Psoas muscle (tissue), 8 donors: ENCODE measurements at regions of chr1 and their contacts with region 1.

Region 1: DNA sequence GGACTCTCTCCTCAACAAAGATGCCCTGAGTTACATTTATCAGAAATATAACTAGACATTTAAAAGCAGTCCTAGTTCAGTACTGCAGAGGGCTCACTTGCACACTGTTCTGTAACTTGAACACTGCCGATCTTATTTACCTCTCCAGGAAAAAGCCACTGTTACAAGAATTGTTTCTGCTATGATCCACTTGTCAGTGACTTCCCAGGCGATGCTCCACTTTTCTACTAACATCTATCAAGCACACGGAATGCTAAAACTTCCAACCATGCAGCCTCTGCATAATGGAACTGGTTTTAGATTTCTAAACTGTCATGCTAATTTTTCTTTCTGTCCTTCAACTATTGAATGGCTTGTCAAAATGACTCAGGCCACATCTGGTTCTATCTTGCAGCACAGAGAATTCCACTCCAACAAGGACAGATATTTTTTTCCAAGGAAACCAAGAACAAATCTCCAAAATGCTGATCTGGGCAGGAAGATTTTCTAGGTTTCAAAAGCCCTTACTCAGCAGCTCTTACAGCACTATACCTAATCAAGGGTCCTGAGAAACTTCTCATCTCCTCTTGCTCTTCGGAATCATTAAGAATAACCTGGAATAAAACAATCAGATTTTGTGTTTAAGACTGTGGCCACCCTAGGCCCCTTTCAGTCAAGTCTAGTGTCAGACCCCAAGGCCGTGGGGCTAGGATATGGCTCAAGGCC is 9.9 kb downstream of the SEC16B start:
- DNase-seq: no peak
- ATAC-seq: peak; percentile 65 to 86 (median 76)
- H3K4me3 ChIP-seq: no peak overlapping the region
- H3K27ac ChIP-seq: no peak overlapping the region
- H3K4me1 ChIP-seq: no peaks in the 10 kb centered on the region
- H3K27me3 ChIP-seq: no peaks in the 10 kb centered on the region
- CTCF ChIP-seq: peak; percentile 36

Region 2: DNA sequence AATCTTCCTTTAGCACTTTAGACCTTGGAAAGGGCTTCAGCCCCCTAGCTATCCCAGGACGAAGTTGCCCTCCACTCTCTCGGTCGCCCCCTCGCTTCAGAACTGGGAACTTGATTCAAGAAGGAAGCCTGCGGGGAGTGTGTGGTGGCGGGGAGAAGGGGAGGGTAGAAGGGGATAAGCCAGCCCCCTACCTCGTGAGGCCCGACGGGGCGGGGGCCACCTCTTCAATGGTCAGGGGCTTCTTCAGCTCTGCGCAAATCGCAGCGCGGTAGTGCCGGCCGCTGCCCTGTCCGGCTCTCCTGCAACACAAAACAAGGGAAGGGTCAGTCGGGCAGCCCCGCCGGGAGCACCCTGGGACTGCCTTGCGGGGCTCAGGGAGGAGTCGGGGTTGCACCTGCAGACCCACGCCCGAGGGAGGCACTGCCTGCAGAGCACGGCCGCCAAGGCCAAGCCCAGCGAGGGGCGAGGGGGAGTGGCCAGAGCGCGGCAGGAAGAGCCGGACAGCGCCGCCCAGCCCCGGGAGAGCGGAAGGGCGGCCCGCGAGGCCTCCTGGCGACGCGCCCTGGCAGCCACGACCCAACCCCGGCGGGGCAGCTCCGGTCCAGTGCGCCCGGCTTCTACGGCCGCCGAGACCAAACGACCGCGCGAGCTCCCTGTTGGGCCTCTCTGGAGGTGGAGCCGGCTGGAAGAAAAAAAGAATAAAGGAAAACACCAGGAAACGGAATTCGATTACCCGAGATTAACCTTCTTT is 77.7 kb after region 1 on chr1:
- intact Hi-C with region 1: loop called in 1 of 2 experiments (anchors 5 kb)
- DNase-seq: peak; percentile 89 to 95
- ATAC-seq: peak; percentile 95 to 97 (median 97)
- H3K4me3 ChIP-seq: peak overlapping the region; percentile 76
- H3K27ac ChIP-seq: peak overlapping the region; percentile 90
- H3K4me1 ChIP-seq: peaks cover 4% of the 10 kb centered on the region
- H3K27me3 ChIP-seq: no peaks in the 10 kb centered on the region
- CTCF ChIP-seq: no peak

Region 3: GRCh38 chr1:178189814-178190213 is 229.9 kb after region 1 on chr1:
- intact Hi-C with region 1: loop called in 1 of 2 experiments (anchors 10 kb)
- DNase-seq: no peak
- ATAC-seq: peak in 3 of 4 donors; percentile 42 to 73 (median 62)
- H3K4me3 ChIP-seq: no peak overlapping the region
- H3K27ac ChIP-seq: no peak overlapping the region
- H3K4me1 ChIP-seq: no peaks in the 10 kb centered on the region
- H3K27me3 ChIP-seq: no peaks in the 10 kb centered on the region
- CTCF ChIP-seq: peak; percentile 42

Region 4: DNA sequence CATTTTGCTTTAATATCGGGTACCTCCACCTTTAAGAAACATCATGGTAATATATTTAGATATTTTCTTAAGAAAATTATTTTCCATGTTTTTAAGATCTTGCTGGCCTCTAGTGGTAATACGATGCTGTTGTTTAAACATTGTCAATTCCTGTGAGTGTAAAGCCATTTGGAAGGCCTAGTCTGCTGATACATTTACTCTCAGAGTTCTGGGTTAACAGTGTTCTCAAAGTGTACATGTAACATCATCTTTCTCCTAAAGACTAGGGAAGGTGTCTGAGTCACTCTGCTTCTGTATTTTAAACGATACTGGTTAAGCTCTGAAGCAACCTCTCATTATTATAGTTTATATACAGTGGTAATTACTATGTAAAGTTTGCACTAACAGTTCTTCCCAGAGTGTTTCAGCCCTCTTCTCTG is 323.0 kb after region 1 on chr1:
- intact Hi-C with region 1: loop called in 1 of 2 experiments (anchors 10 kb)
- DNase-seq: no peak
- ATAC-seq: peak in 1 of 4 donors; percentile 37
- H3K4me3 ChIP-seq: no peak overlapping the region
- H3K27ac ChIP-seq: no peak overlapping the region
- H3K4me1 ChIP-seq: no peaks in the 10 kb centered on the region
- H3K27me3 ChIP-seq: no peaks in the 10 kb centered on the region
- CTCF ChIP-seq: peak; percentile 46